ENCODE measurements at regions of chr18 and their contacts with region 1.

Region 1: DNA sequence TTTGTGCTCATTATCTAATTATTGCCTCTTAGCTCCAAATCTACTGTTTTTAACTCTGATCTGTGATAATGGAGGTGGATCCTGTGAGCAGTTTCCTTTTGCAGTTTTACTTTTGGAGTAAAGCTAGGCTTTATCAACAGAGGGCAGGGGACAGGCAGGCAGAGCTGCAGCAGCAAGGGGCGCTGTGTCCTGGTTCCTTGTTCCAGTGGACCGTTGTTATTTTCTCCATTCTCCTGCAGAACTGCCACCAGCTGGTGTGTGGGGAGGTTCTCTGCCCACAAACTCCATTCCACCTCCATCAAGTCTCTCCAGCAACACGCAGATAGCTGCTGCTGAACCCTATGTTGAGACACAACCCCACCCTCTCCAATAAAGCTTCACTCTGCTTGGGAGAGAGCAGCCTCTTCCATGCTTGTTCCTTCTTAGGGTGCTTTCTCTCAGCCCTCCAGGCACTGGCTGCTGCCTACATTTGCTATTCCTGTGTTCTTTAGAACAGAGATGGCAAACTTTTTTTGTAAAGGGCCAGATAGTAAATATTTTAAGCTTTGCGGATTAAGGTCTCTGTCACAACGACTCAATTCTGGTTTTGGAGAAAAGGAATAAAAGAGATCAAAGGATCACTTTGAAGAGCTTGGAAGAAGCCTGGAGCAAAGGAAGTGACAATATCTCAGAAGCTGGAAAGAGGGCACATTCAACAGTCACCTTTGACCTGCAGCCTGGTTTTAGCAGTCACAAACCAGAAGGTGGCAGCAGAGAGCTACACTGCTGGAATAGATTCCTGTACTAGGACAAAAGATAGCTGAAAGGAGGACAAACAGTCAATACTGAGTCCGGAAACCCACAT is 208.8 kb downstream of the CCDC178 start:
- DNase-seq: peak; percentile 76
- H3K4me3 Mint-ChIP-seq: no peak overlapping the region
- H3K27ac Mint-ChIP-seq: no peak overlapping the region
- H3K4me1 Mint-ChIP-seq: peaks cover 4% of the 10 kb centered on the region
- H3K27me3 Mint-ChIP-seq: no peaks in the 10 kb centered on the region

Region 2: GRCh38 chr18:33495278-33495677 is 263.6 kb after region 1 on chr18:
- CTCF ChIA-PET with region 1: no interaction called
- intact Hi-C with region 1: loop called (anchors 10 kb)
- DNase-seq: no peak
- H3K4me3 Mint-ChIP-seq: no peak overlapping the region
- H3K27ac Mint-ChIP-seq: no peak overlapping the region
- H3K4me1 Mint-ChIP-seq: no peaks in the 10 kb centered on the region
- H3K27me3 Mint-ChIP-seq: no peaks in the 10 kb centered on the region

Region 3: GRCh38 chr18:33761363-33761762 is 529.7 kb after region 1 on chr18:
- CTCF ChIA-PET with region 1: interaction called, 3 read pairs
- intact Hi-C with region 1: loop called (anchors 1 kb)
- DNase-seq: no peak
- H3K4me3 Mint-ChIP-seq: no peak overlapping the region
- H3K27ac Mint-ChIP-seq: no peak overlapping the region
- H3K4me1 Mint-ChIP-seq: no peaks in the 10 kb centered on the region
- H3K27me3 Mint-ChIP-seq: no peaks in the 10 kb centered on the region

Region 4: DNA sequence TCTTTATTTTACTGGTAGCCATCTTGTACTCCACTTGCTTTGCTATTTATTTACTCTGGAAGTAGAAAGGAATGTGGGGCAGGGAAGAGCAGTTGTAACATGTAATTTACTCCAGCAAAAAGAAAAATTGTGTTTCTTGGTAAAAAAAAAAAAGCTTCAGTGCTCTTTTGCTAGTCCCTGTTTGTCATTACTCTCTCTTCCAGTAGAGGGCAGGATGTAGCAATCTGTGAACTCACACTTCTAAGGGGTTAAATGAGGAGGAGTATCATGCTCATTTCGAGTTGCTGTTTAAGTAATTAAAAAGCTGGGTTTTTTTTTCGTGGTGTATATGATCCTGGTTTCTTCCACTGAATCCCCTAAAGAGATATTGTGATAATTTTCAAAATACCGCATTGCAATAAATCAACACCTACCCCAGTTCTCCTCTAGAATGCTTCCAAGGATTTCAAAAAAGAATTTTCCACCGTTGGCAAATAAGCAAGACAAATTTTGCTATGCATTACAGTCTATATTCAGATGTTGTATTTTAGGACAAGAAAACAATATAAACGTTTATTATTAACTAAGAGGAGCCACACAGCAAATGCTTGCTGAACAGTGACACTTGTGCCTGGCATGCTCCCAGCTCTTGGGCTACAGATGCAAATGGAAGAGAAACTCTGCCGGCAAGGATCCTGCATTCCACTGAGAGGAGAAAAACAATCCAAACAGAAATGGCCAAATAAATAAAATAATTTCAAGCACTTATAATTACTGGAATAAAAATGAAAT is 607.9 kb after region 1 on chr18:
- CTCF ChIA-PET with region 1: no interaction called
- intact Hi-C with region 1: loop called (anchors 5 kb)
- DNase-seq: no peak
- H3K4me3 Mint-ChIP-seq: no peak overlapping the region
- H3K27ac Mint-ChIP-seq: no peak overlapping the region
- H3K4me1 Mint-ChIP-seq: no peaks in the 10 kb centered on the region
- H3K27me3 Mint-ChIP-seq: no peaks in the 10 kb centered on the region

Region 5: DNA sequence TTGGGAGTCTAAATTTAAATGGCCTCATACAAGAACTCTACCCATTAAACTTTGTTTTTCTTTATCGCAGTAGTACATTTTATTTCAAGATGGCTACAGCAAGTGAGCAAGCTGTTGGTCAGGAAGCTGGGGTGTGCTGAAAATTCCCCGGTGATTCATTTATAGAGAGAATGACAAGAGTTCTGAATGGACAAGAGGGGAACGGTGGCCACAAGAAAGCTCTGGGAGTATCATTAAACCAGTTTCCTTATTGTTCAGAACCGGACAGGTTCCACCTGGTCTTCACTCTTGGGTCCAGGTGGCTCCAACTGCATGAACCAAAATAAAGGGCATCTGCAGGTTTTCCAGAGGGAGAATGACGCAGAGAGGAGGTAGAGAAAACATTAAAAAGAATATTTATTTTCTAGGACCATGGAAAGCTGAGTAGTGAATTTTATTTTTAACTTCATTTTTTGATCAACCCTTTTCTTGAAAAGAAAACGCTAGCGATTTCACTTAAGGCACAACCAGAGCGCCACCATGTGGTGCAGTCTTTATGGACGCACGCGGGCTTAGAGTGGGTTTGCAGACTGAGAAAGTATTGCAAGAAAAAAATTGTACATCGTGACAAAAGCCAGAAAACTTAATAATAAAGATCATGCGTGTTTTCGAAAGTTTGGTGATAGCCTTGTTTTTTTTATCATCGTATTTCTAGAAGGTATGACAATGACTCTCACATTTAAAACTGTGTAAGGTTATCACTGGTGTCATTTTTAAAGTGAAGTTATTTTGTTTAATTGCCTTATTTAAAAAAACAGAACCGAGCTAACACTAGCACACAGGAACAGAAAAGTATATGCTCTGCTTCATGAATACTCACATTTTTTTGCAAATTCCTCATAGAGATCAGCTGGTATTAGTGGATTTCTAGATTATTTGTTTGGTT is 1090.9 kb after region 1 on chr18:
- CTCF ChIA-PET with region 1: no interaction called
- intact Hi-C with region 1: loop called (anchors 5 kb)
- DNase-seq: peak; percentile 29
- H3K4me3 Mint-ChIP-seq: no peak overlapping the region
- H3K27ac Mint-ChIP-seq: no peak overlapping the region
- H3K4me1 Mint-ChIP-seq: no peaks in the 10 kb centered on the region
- H3K27me3 Mint-ChIP-seq: no peaks in the 10 kb centered on the region

Measured in activated naive CD4-positive, alpha-beta T cell treated with anti-CD3 and anti-CD28 coated beads for 36 hours (primary cell).